ENCODE measurements at regions of chr1 and their contacts with region 1.

Region 1: DNA sequence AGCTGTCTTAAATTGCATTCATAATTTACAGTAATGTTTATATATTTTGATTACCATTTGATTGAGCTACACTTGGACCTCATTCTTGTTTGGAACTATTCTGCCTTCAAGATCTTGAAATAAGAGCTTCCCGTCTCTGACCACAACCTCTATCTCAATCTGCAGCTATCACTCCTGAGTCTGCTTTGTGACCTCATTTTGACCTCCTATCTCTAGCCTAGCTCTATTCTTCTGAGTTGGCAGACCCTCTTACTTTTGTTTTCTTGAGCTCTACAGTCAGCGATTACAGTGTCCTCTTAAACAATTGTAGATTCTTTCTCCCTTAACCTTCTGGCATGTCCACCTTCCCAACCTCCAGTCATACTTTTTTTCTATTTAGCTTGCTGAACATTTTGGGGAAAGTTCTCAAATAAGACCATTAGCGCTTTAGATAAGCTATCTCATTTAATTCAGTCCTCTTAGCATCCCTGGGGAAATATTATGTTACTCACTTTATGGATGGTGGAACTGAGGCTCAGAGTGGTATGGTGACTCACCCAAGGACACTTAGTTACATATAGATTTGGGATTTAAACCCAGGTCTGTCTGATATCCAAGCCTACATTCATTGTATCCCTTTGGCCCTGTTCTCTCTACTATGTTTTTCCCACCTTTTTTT is 19.1 kb downstream of the RPAP2 start:
- DNase-seq: no peak
- ATAC-seq: peak; percentile 74
- H3K4me3 Mint-ChIP-seq: peak overlapping the region; percentile 75
- H3K27ac Mint-ChIP-seq: peak overlapping the region; percentile 80
- H3K4me1 Mint-ChIP-seq: peaks cover 51% of the 10 kb centered on the region
- H3K27me3 Mint-ChIP-seq: no peaks in the 10 kb centered on the region

Region 2: DNA sequence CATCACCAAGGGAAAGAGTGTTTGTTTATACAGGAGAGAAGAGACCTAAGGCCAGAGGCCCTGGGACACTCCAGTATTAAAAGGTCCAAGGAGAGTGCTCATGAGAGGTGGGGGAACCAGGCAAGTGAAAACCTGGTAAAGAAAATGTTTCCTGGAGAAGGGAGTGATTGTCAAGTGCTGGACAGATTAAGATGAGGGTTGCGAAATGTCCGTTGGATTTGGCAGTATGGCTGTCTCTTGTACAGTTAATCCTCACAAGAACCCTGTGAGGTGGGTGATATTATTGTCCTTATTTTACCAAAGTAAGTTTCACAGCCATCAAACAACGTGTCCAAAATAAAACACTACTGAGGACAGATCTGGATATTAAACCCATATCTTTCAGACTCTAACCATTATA is 25.1 kb after region 1 on chr1:
- POLR2A ChIA-PET with region 1: no interaction called
- DNase-seq: no peak
- ATAC-seq: no peak
- H3K4me3 Mint-ChIP-seq: no peak overlapping the region
- H3K27ac Mint-ChIP-seq: no peak overlapping the region
- H3K4me1 Mint-ChIP-seq: peaks cover 10% of the 10 kb centered on the region
- H3K27me3 Mint-ChIP-seq: no peaks in the 10 kb centered on the region

Region 3: DNA sequence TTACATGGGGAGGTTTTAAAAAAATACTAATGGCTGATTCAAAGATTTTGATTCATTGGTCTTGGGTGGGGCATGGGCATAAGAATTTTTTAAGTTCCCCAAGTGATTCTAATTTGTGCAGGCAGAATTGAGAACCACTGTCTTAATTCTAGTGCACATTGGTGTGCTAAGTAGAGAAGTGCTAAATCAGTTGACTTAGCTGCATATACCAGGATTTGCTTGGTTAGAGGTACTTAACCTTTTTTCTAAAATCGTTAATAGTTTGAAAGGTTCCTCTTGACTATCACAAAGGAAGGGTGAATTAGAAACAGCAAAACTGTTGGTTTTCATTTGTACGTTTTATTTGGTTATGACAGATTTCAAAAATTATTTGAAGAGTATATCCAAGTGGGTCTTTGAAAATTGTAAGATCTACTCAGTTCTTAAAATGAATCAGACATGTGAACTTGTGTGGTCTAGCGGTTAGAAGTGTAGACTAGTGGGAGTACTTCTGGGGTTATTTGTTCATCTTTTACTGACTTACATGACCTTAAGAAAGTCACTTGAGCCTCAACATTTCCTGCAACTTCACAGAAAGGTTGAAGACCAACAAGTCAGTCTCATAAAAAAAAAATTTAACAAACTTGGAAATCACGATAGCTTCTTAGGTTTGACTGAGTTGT is 47.5 kb after region 1 on chr1:
- POLR2A ChIA-PET with region 1: interaction called, 10 read pairs
- DNase-seq: no peak
- ATAC-seq: peak; percentile 75
- H3K4me3 Mint-ChIP-seq: peak overlapping the region; percentile 48
- H3K27ac Mint-ChIP-seq: peak overlapping the region; percentile 72
- H3K4me1 Mint-ChIP-seq: peaks cover 48% of the 10 kb centered on the region
- H3K27me3 Mint-ChIP-seq: no peaks in the 10 kb centered on the region

Region 4: GRCh38 chr1:92476071-92476631 is 158.2 kb after region 1 on chr1:
- POLR2A ChIA-PET with region 1: interaction called, 193 read pairs
- DNase-seq: peak; percentile 63
- ATAC-seq: peak; percentile 87
- H3K4me3 Mint-ChIP-seq: peak overlapping the region; percentile 60
- H3K27ac Mint-ChIP-seq: peak overlapping the region; percentile 68
- H3K4me1 Mint-ChIP-seq: peaks cover 62% of the 10 kb centered on the region
- H3K27me3 Mint-ChIP-seq: no peaks in the 10 kb centered on the region

Measured in activated naive CD8-positive, alpha-beta T cell treated with anti-CD3 and anti-CD28 coated beads, Interleukin-2, amount 10 ng/mL, durations not matched to agents 7 days and 5 days (primary cell).